Mammary epithelial cell (primary cell): ENCODE measurements at regions of chr2 and their contacts with region 1.

Region 1: DNA sequence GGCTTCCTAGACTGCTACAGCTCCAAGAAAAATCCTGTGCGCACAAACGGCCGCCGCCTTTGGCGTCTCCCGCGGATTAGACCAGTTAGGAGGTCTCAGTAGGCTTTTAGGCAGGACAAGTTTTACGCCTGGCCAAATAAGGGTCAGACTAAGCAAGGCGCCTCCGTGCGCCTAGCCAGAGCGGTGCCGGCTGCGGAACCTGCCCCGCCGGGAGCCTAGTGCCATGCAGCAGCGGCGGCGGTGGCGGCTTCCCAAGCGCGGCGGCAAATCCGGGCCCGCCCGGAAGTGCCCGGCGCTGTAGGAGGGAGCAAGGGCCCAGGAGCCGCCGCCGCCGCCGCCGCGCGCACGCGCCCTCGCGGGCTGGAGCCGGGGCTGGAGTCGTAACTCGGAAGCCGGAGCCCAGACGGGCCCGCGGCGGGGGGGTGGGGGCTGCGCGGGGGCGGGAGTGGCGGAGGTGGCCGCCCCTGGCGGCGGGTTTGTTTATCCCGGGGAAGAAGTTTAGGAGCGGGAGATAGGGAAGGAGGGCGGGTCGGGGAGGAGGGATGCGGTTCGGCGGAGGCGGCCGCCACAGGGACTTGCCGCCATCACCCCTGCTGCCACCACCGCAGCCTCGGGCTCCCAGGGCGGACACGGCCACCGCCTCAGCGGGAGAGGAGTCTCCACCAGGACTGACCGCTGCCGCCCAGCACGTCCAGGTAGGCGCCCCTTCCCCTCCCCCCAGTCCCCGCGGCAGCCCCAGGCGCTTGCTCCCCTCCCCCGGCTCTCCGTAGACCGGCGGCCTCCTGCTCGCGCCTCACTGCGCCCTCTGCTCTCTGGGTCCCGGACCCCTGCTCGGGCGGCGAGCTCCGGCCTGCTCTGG is at the start of gene SPOPL:
- DNase-seq: peak; percentile 91
- H3K4me3 ChIP-seq: peak within 1 kb of the TSS; percentile 90 to 98 (median 98)
- H3K27ac ChIP-seq: peak within 1 kb of the TSS; percentile 86
- H3K4me1 ChIP-seq: peaks cover 15% of the 10 kb centered on the region
- H3K27me3 ChIP-seq: no peaks in the 10 kb centered on the region
- CTCF ChIP-seq: peak in 1 of 2 donors; percentile 2
- total RNA-seq, gene SPOPL: 23.2 to 24.3 TPM

Region 2: DNA sequence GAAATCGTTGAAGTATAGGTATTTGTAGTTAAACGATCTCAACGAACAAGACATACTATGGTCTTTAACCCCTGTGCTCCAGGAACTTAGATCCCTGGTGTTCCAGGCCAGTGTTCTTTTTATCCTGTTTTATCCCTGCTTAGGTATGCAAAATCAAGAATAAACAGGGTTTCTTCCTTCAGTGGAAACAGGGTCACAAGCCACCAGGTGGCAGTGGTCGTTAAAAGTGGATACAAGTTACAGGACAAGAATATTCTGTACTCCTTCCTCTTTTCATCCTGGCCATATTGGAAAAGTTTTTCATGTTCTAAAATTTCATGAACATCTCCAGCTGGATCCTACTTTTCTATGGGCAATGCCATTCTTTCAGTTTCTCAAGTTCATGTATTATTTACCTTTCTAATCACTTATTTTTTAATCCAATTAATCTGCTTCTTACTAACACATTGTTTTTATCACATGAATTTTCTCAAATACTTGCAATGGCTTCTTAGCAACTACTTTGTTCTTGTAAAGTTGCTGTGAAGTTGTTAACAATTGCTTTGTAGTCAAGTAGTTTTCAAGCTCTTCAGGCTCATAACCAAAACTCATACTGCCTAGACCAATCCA is 553.8 kb before region 1 on chr2:
- CTCF ChIA-PET with region 1: no interaction called
- dilution Hi-C with region 1: no loop called
- in situ Hi-C with region 1: no loop called
- intact Hi-C with region 1: loop called (anchors 10 kb)
- DNase-seq: peak; percentile 56
- H3K4me3 ChIP-seq: no peak overlapping the region
- H3K27ac ChIP-seq: no peak overlapping the region
- H3K4me1 ChIP-seq: no peaks in the 10 kb centered on the region
- H3K27me3 ChIP-seq: no peaks in the 10 kb centered on the region
- CTCF ChIP-seq: peak; percentile 55 to 74

Region 3: GRCh38 chr2:138373993-138374408 is 127.7 kb before region 1 on chr2:
- CTCF ChIA-PET with region 1: no interaction called
- dilution Hi-C with region 1: no loop called
- in situ Hi-C with region 1: no loop called
- intact Hi-C with region 1: loop called (anchors 2 kb)
- DNase-seq: peak; percentile 17
- H3K4me3 ChIP-seq: no peak overlapping the region
- H3K27ac ChIP-seq: no peak overlapping the region
- H3K4me1 ChIP-seq: no peaks in the 10 kb centered on the region
- H3K27me3 ChIP-seq: no peaks in the 10 kb centered on the region
- CTCF ChIP-seq: peak; percentile 70 to 73

Region 4: DNA sequence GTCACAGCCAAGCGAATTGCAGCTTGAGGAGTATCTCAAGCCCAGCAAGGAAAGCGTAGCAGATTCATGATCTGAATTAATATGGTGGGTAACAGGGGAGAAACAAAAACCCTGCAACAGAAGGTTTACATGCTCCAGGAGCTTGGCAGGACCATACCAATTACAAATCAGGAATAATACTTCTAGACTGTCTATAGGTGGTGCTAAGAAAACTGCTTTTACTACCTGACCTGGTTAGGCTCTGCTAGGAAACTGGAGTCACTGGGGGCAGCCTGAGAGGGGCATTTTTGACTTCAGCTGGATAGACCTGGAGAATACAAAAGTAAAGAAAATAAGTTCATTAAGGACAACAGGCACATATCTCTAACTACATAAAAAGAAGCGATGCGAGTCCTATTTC is 24.7 kb before region 1 on chr2:
- CTCF ChIA-PET with region 1: no interaction called
- dilution Hi-C with region 1: no loop called
- in situ Hi-C with region 1: no loop called
- intact Hi-C with region 1: loop called (anchors 2 kb)
- DNase-seq: no peak
- H3K4me3 ChIP-seq: no peak overlapping the region
- H3K27ac ChIP-seq: no peak overlapping the region
- H3K4me1 ChIP-seq: peaks cover 17% of the 10 kb centered on the region
- H3K27me3 ChIP-seq: no peaks in the 10 kb centered on the region
- CTCF ChIP-seq: peak in 1 of 2 donors; percentile 15

Region 5: DNA sequence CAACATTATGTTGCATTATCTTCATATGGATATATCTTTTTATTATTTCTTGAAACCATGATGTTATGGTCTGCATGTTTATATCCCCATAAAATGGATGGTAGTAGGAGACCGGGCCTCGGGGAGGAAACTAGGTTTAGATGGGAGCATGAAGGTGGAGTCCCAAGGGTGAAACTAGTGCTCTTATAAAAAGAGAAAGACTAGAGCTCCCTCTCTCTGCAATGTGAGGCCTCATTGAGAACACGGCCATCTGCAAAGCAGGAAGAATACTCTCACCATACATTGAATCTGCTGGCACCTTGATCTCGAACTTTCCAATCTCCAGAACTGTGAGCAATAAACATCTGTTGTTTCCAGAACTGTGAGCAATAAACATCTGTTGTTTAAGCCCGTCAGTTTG is 214.5 kb after region 1 on chr2:
- CTCF ChIA-PET with region 1: no interaction called
- dilution Hi-C with region 1: no loop called
- in situ Hi-C with region 1: no loop called
- intact Hi-C with region 1: loop called (anchors 5 kb)
- DNase-seq: no peak
- H3K4me3 ChIP-seq: no peak overlapping the region
- H3K27ac ChIP-seq: no peak overlapping the region
- H3K4me1 ChIP-seq: peaks cover 10% of the 10 kb centered on the region
- H3K27me3 ChIP-seq: no peaks in the 10 kb centered on the region
- CTCF ChIP-seq: peak in 1 of 2 donors; percentile 36